Calu3 (cell line): ENCODE measurements at regions of chr2 and their contacts with region 1.

Region 1: DNA sequence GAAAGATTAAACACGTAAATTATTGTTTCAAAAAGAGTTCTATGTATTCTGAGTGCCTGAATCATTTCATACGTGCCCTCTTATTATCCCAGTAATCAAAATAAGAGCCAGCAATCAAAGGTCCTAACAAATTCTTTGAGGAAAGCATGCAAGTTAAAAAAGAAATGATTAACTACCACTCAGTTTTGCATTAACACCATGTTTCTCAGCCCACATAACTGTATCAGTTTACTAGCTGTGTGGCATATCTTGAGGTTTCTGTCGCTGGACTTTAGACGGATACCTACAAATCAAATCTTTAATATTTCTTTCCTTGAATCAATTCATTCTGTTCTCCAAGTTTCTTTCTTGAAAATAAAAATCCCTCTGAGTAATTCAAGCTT is 668.9 kb upstream of the CHAC2 start:
- DNase-seq: no peak
- H3K4me3 Mint-ChIP-seq: peak overlapping the region; percentile 59
- H3K27ac Mint-ChIP-seq: peak overlapping the region; percentile 88
- H3K4me1 Mint-ChIP-seq: peaks cover 53% of the 10 kb centered on the region
- H3K27me3 Mint-ChIP-seq: no peaks in the 10 kb centered on the region
- CTCF ChIP-seq: no peak

Region 2: GRCh38 chr2:53129851-53130250 is 31.2 kb after region 1 on chr2:
- CTCF ChIA-PET with region 1: no interaction called
- intact Hi-C with region 1: loop called (anchors 2 kb)
- DNase-seq: peak; percentile 25
- H3K4me3 Mint-ChIP-seq: no peak overlapping the region
- H3K27ac Mint-ChIP-seq: peak overlapping the region; percentile 48
- H3K4me1 Mint-ChIP-seq: peaks cover 42% of the 10 kb centered on the region
- H3K27me3 Mint-ChIP-seq: no peaks in the 10 kb centered on the region
- CTCF ChIP-seq: no peak

Region 3: DNA sequence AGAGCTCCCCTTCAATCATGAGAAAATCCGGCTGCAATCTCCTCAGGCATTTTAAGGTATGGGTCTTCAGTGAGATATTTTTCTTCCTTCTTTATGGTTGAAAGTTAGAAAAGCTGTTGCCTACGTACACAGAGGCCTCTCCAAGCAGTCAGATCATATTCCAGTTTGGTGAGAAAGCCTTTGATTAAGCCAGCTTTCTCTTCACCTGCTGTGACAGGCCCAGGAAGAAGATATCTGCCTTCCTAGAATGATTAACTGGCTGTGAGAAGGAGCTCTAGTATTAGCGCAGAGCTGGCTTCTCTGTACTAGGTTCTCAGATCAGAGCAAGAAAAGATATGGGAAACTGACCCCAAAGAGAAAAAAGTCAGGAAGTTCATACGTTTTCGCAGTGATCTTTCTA is 83.9 kb after region 1 on chr2:
- CTCF ChIA-PET with region 1: no interaction called
- intact Hi-C with region 1: loop called (anchors 5 kb)
- DNase-seq: peak; percentile 14
- H3K4me3 Mint-ChIP-seq: no peak overlapping the region
- H3K27ac Mint-ChIP-seq: no peak overlapping the region
- H3K4me1 Mint-ChIP-seq: peaks cover 23% of the 10 kb centered on the region
- H3K27me3 Mint-ChIP-seq: no peaks in the 10 kb centered on the region
- CTCF ChIP-seq: no peak

Region 4: GRCh38 chr2:53347269-53347668 is 248.6 kb after region 1 on chr2:
- CTCF ChIA-PET with region 1: no interaction called
- intact Hi-C with region 1: no loop called
- DNase-seq: no peak
- H3K4me3 Mint-ChIP-seq: no peak overlapping the region
- H3K27ac Mint-ChIP-seq: no peak overlapping the region
- H3K4me1 Mint-ChIP-seq: no peaks in the 10 kb centered on the region
- H3K27me3 Mint-ChIP-seq: no peaks in the 10 kb centered on the region
- CTCF ChIP-seq: no peak

Region 5: DNA sequence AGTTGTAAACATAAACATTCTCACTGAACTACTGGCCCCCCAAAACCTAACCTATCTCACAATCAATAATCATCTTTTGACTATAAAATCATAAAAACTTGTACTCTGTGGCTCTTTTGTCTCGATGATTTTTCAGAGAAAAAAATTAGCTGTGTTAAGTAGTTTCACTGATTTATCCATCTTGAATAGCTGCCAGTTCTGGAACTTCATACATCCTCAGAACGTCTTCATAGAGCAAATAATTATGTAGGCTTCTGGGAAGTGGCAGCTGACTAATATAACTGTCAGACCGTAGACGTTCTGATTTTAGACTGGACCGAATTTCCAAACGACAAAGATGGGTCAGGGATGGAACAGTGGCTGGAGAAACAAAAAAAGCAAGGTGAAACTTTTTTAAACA is 571.6 kb after region 1 on chr2:
- CTCF ChIA-PET with region 1: no interaction called
- intact Hi-C with region 1: no loop called
- DNase-seq: no peak
- H3K4me3 Mint-ChIP-seq: no peak overlapping the region
- H3K27ac Mint-ChIP-seq: no peak overlapping the region
- H3K4me1 Mint-ChIP-seq: no peaks in the 10 kb centered on the region
- H3K27me3 Mint-ChIP-seq: no peaks in the 10 kb centered on the region
- CTCF ChIP-seq: no peak